ENCODE measurements at regions of chr11 and their contacts with region 1.

Region 1: DNA sequence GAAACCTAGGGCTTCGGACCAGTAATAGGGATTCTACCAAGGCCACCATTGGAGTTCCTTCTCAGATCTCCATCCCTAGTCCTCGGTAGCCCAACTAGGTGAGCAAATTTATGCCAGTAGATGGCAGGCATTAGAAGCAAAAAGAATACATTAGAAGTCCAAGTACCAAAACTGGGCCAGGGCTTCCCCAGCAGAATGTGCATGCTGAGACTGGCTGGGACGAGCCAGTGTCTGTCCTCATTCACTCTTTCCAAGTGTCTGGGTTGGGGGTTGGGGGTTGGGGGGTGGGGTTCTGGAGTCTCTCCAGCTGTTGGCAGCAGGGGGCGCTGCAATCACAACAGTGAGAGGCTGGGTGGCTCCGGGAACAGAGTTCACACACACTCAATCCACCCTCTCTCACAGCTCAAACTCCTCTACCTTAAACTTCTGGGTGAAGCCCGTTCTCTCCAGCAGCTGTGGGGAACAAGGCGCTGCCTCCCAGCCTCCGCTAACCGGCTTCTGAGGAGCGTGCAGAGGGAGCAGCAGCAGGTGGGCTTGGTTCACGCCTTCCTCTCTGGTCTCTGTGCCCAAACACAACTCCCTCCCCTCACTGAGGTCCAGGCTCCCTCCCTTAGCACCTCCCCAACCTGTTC is 57.5 kb downstream of the BTG4 start:
- DNase-seq: no peak
- H3K4me3 ChIP-seq: no peak overlapping the region
- H3K27me3 ChIP-seq: no peaks in the 10 kb centered on the region
- CTCF ChIP-seq: peak; percentile 59

Region 2: DNA sequence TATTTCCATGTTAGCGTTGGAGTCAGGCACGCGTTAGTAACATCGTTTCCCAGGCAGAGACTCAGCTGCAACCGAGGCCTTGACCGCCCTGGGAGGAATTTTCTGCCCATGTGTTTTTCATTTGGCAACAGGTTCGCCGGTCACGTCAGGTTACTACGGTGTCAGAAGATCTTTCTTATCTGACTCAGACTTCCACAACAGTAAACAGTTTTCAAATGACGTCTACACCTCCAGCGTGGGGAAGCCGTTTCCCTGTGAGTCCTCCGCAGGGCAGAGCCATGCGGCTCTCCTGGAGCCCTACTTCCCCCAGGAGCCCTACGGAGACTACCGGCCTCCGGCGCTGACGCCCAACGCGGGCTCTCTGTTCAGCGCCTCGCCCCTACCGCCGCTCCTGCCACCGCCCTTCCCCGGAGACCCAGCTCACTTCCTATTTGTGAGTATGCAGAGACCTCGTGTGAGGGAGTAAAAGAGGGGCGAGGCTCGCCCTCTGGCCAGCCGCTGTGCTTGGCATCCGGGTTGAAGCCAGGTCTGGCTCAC is 170.7 kb before region 1 on chr11:
- CTCF ChIA-PET with region 1: interaction called, 11 read pairs
- POLR2A ChIA-PET with region 1: no interaction called
- DNase-seq: peak; percentile 70
- H3K4me3 ChIP-seq: no peak overlapping the region
- H3K27me3 ChIP-seq: peaks cover 8% of the 10 kb centered on the region; the same call in 1 of the 2 replicates
- CTCF ChIP-seq: no peak

Region 3: DNA sequence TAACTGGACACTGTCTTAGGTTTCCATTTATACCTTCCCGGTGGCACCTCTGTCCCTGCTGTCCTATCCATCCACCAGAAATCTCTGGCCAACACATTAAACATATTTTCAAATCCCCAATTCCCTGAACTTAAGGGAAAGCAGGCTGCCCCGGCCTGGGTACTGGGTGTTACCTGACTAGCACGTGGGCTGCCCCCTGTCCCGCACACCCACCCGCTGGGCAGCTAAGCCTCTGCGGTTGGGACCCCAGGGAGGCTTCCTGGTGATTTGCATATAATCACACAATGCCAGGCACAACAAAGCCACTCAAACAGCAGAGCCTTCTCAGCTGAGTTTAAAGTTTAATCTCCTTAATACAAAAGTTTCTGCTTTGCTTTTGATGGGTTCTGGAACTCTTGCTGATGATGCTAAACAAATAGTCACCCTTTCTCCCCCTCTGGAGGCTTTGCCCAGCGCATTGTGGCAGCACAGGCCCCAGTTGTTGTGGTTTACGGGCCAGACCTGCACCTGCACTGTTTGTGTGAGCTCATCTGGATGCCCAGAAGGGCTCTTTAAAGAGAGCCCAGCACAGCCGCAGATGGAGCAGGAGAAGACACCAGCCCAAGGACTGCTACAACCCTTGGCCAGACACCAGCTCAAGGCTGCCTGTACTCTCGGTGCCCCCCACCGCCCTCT is 15.7 kb before region 1 on chr11:
- CTCF ChIA-PET with region 1: no interaction called
- POLR2A ChIA-PET with region 1: no interaction called
- DNase-seq: no peak
- H3K4me3 ChIP-seq: no peak overlapping the region
- H3K27me3 ChIP-seq: no peaks in the 10 kb centered on the region
- CTCF ChIP-seq: no peak

Region 4: GRCh38 chr11:111540114-111540936 is 85.6 kb after region 1 on chr11 and contains the start of gene LAYN:
- CTCF ChIA-PET with region 1: interaction called, 32 read pairs
- POLR2A ChIA-PET with region 1: no interaction called
- DNase-seq: no peak
- H3K4me3 ChIP-seq: peak within 1 kb of the TSS; percentile 56
- H3K27me3 ChIP-seq: no peaks in the 10 kb centered on the region
- CTCF ChIP-seq: 0 out of 2 replicates have a peak, but pooled peaks have one; percentile 8
- polyA plus RNA-seq, gene LAYN: 253 and 302 TPM in 2 replicates

Region 5: GRCh38 chr11:111557425-111558111 is 102.9 kb after region 1 on chr11:
- CTCF ChIA-PET with region 1: interaction called, 52 read pairs
- POLR2A ChIA-PET with region 1: no interaction called
- DNase-seq: peak; percentile 100
- H3K4me3 ChIP-seq: no peak overlapping the region
- H3K27me3 ChIP-seq: no peaks in the 10 kb centered on the region
- CTCF ChIP-seq: 0 out of 2 replicates have a peak, but pooled peaks have one; percentile 15

Region 6: DNA sequence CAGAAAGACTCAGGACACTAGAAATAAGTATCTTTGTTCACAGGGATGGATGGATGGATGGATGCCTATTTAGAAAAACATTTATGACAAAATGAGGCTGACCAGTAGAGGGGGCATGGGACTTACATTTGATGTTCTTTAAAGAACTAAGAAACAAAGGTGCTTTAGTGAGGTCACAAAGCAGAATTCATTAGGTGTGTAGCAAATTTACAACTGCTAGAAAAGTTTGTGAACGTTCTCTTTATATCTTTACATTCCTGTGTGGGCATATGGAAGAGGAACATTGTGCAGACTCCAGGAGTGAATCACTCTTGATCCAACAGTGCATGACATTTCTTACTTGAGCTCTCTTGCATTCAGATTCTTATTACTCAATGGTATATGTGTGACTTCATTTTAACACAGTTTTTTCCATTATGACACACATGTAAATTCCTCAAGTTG is 131.7 kb after region 1 on chr11:
- CTCF ChIA-PET with region 1: interaction called, 11 read pairs
- POLR2A ChIA-PET with region 1: no interaction called
- DNase-seq: no peak
- H3K4me3 ChIP-seq: no peak overlapping the region
- H3K27me3 ChIP-seq: no peaks in the 10 kb centered on the region
- CTCF ChIP-seq: peak; percentile 70

Region 7: GRCh38 chr11:111749646-111750045 is 295.0 kb after region 1 on chr11:
- CTCF ChIA-PET with region 1: no interaction called
- POLR2A ChIA-PET with region 1: no interaction called
- DNase-seq: no peak
- H3K4me3 ChIP-seq: no peak overlapping the region
- H3K27me3 ChIP-seq: no peaks in the 10 kb centered on the region
- CTCF ChIP-seq: no peak